ENCODE measurements at regions of chr20 and their contacts with region 1.

Region 1: GRCh38 chr20:50115591-50116372 is 2.8 kb upstream of the UBE2V1 start:
- DNase-seq: peak; percentile 95
- H3K4me3 Mint-ChIP-seq: peak overlapping the region; percentile 77
- H3K27ac Mint-ChIP-seq: peak overlapping the region; percentile 77
- H3K4me1 Mint-ChIP-seq: peaks cover 44% of the 10 kb centered on the region
- H3K27me3 Mint-ChIP-seq: no peaks in the 10 kb centered on the region

Region 2: DNA sequence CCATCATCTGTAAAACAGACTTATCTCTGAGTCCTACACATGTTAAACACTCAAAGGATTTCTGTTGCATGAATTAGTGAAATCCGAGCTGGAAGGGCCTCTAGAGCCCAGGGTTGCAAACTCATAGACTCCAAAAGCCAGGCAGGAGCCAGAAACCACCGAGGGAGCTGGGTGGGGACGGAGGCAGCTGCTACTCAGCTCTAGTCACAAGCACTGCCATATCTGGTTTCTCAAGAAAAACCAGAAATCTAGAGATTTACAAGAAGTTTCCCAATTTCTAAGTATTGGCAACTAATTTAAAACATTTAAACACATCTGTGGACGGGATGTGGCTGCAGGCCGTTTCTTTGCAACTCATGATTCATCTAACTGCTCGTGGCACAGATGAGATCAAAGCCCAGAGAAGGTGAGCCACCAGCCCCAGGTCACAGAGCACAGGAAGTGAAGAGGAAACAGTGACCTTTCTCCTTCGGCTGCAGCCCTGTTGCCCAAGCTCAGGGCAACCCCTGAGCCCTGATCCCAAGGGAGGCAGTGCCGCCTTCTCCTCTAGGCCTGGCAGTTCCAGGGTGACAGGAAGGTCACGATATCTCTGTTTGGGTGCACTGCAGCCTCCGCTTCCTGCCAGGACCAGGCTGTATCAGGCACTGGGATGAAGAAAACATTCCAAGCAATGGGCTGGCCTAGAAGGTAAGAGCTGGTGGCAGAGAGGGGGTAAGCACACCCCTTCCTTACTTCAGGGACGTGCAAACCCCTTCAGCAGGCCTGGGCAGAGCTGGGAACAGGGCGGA is 521.4 kb before region 1 on chr20:
- CTCF ChIA-PET with region 1: no interaction called
- POLR2A ChIA-PET with region 1: no interaction called
- intact Hi-C with region 1: loop called (anchors 2 kb)
- DNase-seq: peak; percentile 92
- H3K4me3 Mint-ChIP-seq: peak overlapping the region; percentile 95
- H3K27ac Mint-ChIP-seq: peak overlapping the region; percentile 100
- H3K4me1 Mint-ChIP-seq: peaks cover 81% of the 10 kb centered on the region
- H3K27me3 Mint-ChIP-seq: no peaks in the 10 kb centered on the region

Region 3: DNA sequence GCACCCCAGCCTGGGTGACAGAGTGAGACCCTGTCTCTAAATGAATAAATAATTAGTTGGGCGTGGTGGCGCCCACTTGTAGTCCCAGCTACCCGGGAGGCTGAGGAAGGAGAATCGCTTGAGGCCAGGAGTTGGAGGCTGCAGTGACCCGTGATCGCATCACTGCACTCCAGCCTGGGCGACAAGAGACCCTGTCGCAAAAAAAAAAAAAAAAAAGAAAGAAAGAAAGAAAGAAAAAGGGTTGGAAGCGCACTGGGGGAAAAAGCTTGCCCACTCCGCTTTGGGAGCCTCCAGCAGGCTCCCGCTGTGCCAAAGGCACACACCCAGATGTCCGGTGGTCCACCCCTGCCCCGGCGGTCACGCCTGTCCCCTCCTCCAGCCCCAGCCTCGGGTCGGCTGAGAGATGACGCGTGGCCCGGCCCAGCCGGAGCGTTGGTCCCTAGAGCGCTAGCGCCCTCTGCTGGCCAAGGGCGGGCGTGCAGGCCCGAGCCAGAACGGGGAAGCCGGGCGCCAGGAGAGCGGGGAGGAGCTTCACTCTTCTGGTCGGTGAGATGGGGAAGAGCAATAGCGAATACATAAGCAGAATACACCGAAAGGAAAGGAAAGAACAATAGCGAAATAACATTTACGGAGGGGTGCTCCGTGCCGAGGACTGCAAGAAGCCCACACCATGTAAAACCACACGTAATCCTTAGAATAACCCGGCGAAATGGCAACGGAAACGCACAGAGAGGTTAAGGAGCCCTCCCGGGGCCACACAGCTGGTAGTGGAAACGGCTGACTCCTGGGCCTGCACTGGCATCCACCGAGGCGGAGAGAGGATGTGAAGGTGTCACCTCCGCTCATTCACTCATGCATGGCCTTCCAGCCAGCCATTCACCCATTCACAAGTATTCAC is 44.5 kb before region 1 on chr20:
- CTCF ChIA-PET with region 1: interaction called, 12 read pairs
- POLR2A ChIA-PET with region 1: no interaction called
- intact Hi-C with region 1: no loop called
- DNase-seq: peak; percentile 94
- H3K4me3 Mint-ChIP-seq: peak overlapping the region; percentile 54
- H3K27ac Mint-ChIP-seq: no peak overlapping the region
- H3K4me1 Mint-ChIP-seq: peaks cover 2% of the 10 kb centered on the region
- H3K27me3 Mint-ChIP-seq: no peaks in the 10 kb centered on the region

Region 4: DNA sequence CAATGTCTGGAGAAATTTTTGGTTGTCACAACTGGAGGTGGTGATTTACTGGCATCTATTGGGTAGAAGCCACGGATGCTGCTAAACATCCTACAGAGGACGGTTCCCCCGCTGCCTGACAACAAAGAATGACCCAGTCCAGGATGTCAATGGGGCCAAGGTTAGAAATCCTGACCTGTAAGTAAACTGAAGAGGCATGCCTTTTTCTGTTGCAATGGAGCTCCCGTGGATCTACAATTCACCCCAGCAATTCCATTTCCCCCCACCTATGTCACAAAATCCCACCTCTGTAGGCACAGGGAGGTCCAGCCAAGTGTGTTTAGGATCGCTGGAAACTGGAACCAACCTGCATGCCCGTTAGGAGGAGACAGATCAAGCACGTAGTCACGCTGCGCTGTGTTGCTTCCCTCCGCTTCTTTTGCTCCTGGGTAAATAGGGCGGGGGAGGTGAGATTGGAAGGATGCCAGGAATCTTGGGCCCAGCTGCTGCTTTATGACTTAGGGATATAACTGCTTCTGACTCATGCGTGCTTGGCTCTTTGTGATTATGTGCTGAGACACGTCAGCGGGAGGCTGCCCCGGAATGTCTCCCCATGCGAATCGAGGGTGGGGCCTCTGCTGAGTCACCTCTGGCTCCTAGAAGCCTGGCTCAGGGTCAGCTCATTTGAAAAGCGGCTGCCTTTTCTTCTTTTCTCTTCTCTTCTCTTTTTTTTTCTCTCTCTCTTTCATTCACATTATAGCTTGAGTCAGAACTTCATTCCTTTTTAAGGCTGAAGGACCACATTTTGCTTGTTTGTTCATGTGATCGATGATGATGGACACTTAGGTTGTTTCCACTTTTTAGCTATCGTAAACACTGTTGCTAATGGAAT is 50.1 kb after region 1 on chr20:
- CTCF ChIA-PET with region 1: interaction called, 216 read pairs
- POLR2A ChIA-PET with region 1: interaction called, 6 read pairs
- intact Hi-C with region 1: loop called (anchors 1 kb)
- DNase-seq: peak; percentile 95
- H3K4me3 Mint-ChIP-seq: peak overlapping the region; percentile 61
- H3K27ac Mint-ChIP-seq: peak overlapping the region; percentile 84
- H3K4me1 Mint-ChIP-seq: peaks cover 11% of the 10 kb centered on the region
- H3K27me3 Mint-ChIP-seq: peaks cover 2% of the 10 kb centered on the region

Region 5: DNA sequence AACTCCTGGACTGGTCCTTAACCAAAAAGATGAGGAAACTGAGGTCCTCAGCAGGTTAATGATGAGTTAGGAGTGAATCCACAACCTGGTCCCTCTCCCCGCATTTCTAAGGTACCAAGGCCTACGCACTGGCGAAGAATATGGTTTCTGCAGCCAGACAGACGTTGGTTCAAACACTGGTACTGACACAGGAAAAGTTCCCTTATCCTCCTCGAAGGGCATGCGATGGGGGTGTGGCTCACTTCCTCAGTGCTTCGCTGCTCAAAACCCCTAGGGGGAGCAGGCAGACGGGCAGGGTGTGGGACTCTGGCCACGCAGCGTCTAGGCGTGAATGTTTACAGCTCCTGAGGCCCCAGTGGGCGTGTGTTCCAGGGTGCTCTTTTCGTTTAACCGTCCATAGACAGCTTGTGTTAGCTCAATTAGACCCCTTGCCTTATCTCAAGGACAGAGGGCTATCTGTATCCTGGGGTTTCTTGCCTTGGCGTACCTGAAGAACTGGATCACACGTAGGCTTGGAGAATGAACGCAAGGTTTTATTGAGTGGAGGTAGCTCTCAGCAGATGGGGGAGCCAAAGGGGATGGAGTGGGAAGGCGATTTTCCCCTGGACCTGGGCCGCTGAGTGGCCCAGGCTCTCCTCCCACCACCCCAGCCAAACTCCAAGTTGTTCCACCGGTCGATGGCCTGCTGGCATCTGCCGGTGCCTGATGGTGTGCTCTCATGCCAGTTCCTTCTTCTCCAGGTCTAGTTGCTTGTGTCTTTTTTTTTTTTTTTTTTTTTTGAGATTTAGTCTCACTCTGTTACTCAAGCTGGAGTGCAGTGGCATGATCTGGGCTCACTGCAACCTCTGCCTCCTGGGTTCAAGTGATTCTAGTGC is 362.6 kb after region 1 on chr20:
- CTCF ChIA-PET with region 1: no interaction called
- POLR2A ChIA-PET with region 1: interaction called, 4 read pairs
- intact Hi-C with region 1: loop called (anchors 10 kb)
- DNase-seq: peak; percentile 89
- H3K4me3 Mint-ChIP-seq: no peak overlapping the region
- H3K27ac Mint-ChIP-seq: no peak overlapping the region
- H3K4me1 Mint-ChIP-seq: peaks cover 37% of the 10 kb centered on the region
- H3K27me3 Mint-ChIP-seq: no peaks in the 10 kb centered on the region

Region 6: DNA sequence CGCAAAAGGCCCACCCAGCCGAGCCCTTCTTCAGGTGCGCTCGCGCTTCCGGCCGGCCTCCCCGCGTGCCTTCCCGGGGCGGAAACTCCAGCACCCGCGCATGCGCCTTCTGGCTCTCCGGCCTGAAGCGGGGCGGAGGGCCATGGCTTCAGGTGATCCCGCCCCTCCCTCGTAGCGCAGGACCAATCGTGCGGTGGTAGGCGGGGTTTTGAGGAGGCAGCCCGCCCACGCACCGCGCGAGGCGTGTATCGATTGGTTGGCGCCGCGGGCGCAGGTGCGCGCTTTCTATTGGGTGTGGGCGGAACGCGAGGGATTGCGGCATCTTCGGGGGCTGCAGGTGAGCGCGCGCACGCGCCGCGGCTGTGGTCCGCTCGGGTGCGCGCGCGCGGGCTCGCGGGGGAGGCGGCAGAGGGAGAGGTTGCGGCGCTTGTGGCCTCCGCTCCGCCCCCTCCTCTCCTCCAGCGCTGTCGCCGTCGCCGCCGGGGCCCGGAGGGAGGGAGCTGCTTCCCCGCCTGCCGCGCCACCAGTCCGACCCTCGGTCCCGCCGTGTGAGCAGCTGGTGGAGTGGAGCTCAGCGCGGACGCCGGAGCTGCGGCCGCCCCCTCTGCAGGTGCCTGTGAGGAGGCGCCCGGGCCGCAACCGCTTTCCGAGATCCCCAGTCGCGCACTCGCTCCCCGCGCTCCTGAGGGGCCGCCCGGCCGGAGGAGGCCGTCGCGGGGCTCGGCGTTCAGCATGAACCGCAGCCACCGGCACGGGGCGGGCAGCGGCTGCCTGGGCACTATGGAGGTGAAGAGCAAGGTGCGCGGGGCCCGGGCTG is 615.5 kb after region 1 on chr20 and contains the start of gene PARD6B:
- CTCF ChIA-PET with region 1: no interaction called
- POLR2A ChIA-PET with region 1: no interaction called
- intact Hi-C with region 1: loop called (anchors 1 kb)
- DNase-seq: peak; percentile 100
- H3K4me3 Mint-ChIP-seq: peak within 1 kb of the TSS; percentile 87
- H3K27ac Mint-ChIP-seq: peak within 1 kb of the TSS; percentile 65
- H3K4me1 Mint-ChIP-seq: peaks cover 59% of the 10 kb centered on the region
- H3K27me3 Mint-ChIP-seq: no peaks in the 10 kb centered on the region
- total RNA-seq, gene PARD6B: 6.3 to 8.2 TPM

Measured in activated CD4-positive, alpha-beta memory T cell treated with anti-CD3 and anti-CD28 coated beads for 36 hours (primary cell).